WTC11 (cell line): ENCODE measurements at regions of chr2 and their contacts with region 1.

Region 1: GRCh38 chr2:238263204-238264071 is 23.6 kb upstream of the HES6 start:
- DNase-seq: peak; percentile 91
- ATAC-seq: peak; percentile 89
- H3K4me3 Mint-ChIP-seq: no peak overlapping the region
- H3K27ac Mint-ChIP-seq: peak overlapping the region; percentile 83
- H3K4me1 Mint-ChIP-seq: peaks cover 3% of the 10 kb centered on the region
- H3K27me3 Mint-ChIP-seq: no peaks in the 10 kb centered on the region
- CTCF ChIP-seq: peak; percentile 68

Region 2: DNA sequence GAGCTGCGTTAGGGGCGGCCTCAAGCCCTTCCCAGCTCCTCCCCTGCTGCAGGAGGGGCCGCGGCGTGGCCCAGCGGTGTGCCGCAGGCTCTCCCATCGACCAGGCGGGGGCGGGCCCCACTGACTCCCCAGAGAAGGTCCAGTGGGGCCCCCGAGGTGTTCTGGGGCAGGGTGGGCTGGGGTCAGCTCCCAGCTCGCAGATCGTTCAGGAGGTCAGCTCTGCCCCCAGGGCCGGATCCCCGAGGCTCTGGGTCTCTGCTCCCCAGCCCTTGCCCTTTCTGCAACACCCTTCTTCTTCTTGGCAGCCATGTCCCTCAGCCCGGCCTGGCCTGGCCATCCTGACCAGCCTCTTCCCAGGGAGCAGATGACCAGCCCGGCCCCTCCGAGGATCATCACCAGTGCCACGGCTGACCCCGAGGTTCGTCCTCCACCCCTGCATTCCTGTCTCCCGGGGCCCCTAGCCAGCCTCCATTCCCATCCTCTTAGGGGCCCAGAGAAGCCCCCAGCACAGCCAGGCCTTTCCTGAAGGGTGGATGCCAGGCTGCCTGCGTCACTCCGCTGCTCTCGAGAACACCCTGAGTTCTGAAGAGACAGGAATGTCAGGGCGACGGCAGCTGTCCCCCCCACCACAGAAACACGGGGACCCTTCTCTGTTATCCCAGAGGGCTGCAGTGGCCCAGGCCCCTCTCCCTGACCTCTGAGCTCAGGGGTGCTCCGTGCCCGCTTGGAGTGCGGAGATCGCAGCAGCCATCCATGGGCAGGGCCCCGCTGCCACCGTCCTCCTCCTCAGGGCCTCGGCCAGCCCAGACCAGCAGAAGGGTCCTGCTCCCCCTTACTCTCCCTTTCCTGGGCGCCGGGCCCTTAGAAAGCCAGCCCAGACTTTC is 135.9 kb before region 1 on chr2:
- CTCF ChIA-PET with region 1: interaction called, 10 read pairs
- POLR2A ChIA-PET with region 1: no interaction called
- DNase-seq: no peak
- ATAC-seq: peak; percentile 46
- H3K4me3 Mint-ChIP-seq: no peak overlapping the region
- H3K27ac Mint-ChIP-seq: no peak overlapping the region
- H3K4me1 Mint-ChIP-seq: no peaks in the 10 kb centered on the region
- H3K27me3 Mint-ChIP-seq: no peaks in the 10 kb centered on the region
- CTCF ChIP-seq: no peak

Region 3: DNA sequence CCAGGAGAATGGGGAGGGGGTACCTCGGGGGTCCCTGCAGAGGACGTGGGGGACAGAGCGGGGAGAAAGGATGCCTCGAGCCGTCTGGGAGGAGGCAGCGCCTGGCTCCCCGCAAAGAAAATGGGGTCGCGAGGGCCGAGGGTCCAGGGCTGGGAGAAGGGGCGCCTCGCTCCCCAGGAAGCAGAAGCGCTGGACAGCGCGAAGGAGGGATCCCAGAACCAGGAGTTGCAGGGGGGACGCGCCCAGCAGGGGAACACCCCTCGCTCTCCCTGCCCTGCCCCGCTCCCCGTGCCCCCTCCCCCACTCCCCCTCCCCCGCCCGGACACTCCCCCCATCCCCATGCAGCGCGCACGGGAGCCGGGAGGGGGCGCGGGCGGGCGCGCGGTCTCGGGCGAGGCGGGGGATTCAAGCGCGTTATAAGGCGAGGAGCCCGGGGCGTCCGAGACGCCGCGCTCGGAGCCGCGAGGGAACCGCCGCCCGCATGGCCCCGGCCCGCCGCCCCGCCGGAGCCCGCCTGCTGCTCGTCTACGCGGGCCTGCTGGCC is 104.8 kb before region 1 on chr2 and contains the start of gene ERFE:
- CTCF ChIA-PET with region 1: interaction called, 35 read pairs
- POLR2A ChIA-PET with region 1: no interaction called
- DNase-seq: peak; percentile 66
- ATAC-seq: peak; percentile 68
- H3K4me3 Mint-ChIP-seq: peak within 1 kb of the TSS; percentile 73
- H3K27ac Mint-ChIP-seq: no peak within 1 kb of the TSS
- H3K4me1 Mint-ChIP-seq: peaks cover 11% of the 10 kb centered on the region
- H3K27me3 Mint-ChIP-seq: peaks cover 42% of the 10 kb centered on the region
- CTCF ChIP-seq: peak; percentile 60
- total RNA-seq, gene ERFE: 4.5 to 6.3 TPM (median 6.0 TPM) in 3 replicates

Region 4: DNA sequence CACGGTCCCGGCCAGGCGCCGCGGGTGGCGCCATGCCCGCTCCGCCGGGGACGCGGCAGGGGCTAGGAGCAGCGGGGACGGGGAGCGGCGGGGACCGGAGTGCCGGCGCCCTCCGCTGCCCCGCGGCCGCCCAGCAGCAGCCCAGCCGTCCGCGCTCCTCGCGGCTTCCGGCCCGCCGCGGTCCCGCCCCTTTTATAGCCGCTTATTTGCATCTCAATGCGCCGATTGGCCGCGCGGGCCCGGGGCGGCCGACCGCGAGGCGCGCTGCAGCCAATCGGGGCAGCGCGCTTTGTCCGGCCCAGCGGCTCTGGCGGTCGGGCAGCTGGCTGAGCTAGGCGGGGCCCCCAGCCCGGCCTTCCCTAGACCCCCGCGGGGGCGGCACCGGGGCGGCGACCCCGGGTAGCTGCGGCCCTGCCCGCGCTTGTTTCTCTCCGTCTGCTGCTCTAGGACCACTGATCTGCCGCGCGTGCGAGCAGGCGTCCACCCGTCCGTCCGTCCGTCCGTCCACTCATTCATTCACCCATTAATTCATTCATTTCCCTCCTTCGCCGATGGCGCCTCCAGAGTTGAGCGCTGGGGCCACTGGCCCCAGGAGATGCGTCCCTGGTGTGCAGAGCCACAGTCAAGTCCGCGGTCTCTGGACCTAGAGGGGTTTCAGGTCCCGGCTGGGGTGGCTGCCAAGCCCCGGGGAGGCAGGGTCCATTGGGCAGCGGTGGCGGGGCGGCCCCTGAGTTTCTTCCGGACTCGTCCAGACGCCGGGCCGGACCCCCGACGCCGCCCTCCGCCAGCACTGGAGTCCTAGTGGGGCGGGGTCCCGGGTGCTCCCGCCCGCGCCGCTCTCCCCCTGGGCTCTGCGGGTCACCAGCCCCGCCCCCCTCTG is 23.3 kb before region 1 on chr2 and contains the start of gene HES6:
- CTCF ChIA-PET with region 1: interaction called, 28 read pairs
- POLR2A ChIA-PET with region 1: no interaction called
- DNase-seq: peak; percentile 90
- ATAC-seq: peak; percentile 80
- H3K4me3 Mint-ChIP-seq: peak within 1 kb of the TSS; percentile 87
- H3K27ac Mint-ChIP-seq: peak within 1 kb of the TSS; percentile 95
- H3K4me1 Mint-ChIP-seq: peaks cover 16% of the 10 kb centered on the region
- H3K27me3 Mint-ChIP-seq: peaks cover 51% of the 10 kb centered on the region
- CTCF ChIP-seq: no peak
- total RNA-seq, gene HES6: 52.1 to 63.9 TPM (median 63.4 TPM) in 3 replicates

Region 5: GRCh38 chr2:238277695-238278094 is 14.3 kb after region 1 on chr2:
- CTCF ChIA-PET with region 1: interaction called, 79 read pairs
- POLR2A ChIA-PET with region 1: interaction called, 3 read pairs
- DNase-seq: peak; percentile 61
- ATAC-seq: peak; percentile 89
- H3K4me3 Mint-ChIP-seq: no peak overlapping the region
- H3K27ac Mint-ChIP-seq: peak overlapping the region; percentile 89
- H3K4me1 Mint-ChIP-seq: peaks cover 4% of the 10 kb centered on the region; the same call in 1 of the 2 replicates
- H3K27me3 Mint-ChIP-seq: no peaks in the 10 kb centered on the region
- CTCF ChIP-seq: no peak; the same call in 1 of the 2 replicates

Region 6: GRCh38 chr2:238305092-238305862 is 41.8 kb after region 1 on chr2:
- CTCF ChIA-PET with region 1: interaction called, 11 read pairs
- POLR2A ChIA-PET with region 1: no interaction called
- DNase-seq: no peak
- ATAC-seq: peak; percentile 36
- H3K4me3 Mint-ChIP-seq: no peak overlapping the region
- H3K27ac Mint-ChIP-seq: no peak overlapping the region; the same call in 1 of the 2 replicates
- H3K4me1 Mint-ChIP-seq: no peaks in the 10 kb centered on the region; the same call in 1 of the 2 replicates
- H3K27me3 Mint-ChIP-seq: no peaks in the 10 kb centered on the region
- CTCF ChIP-seq: no peak

Region 7: DNA sequence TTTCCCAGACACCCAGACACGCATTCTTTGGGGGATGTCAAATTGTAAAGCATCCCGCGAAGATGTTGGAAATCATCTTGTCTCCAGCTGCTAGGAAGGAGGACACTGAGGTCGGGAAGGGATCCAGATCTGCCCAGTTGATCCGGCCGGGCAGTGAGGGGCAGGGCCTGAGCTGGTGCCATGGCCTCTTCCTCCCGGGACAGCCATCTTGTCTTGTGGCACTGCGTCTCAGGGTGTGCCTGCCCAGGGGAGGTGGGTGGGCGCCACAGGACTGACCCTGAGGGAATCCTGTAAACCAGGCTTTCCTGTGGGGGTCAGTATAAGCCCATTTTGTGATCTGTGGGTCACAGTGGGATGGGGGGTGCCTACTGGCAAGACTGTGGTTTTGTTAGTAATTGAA is 67.0 kb after region 1 on chr2:
- CTCF ChIA-PET with region 1: no interaction called
- POLR2A ChIA-PET with region 1: no interaction called
- DNase-seq: no peak
- ATAC-seq: no peak
- H3K4me3 Mint-ChIP-seq: no peak overlapping the region
- H3K27ac Mint-ChIP-seq: no peak overlapping the region
- H3K4me1 Mint-ChIP-seq: no peaks in the 10 kb centered on the region
- H3K27me3 Mint-ChIP-seq: no peaks in the 10 kb centered on the region
- CTCF ChIP-seq: no peak

Region 8: DNA sequence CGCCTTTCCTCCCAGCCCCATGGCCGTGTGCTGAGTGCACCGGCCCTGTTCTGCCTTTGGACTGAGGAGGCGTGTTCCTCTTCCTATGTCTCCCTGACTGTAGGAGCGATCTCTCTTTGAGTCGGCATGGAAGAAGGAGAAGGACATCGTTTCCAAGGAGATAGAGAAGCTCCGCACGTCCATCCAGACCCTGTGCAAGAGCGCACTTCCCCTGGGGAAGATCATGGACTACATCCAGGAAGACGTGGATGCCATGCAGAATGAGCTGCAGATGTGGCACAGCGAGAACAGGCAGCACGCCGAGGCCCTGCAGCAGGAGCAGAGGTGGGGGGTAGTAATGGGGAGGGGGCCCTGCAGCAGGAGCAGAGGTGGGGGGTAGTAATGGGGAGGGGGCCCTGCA is 133.9 kb after region 1 on chr2:
- CTCF ChIA-PET with region 1: no interaction called
- POLR2A ChIA-PET with region 1: no interaction called
- DNase-seq: no peak
- ATAC-seq: peak; percentile 39; the same call in 1 of the 2 replicates
- H3K4me3 Mint-ChIP-seq: no peak overlapping the region
- H3K27ac Mint-ChIP-seq: no peak overlapping the region
- H3K4me1 Mint-ChIP-seq: peaks cover 3% of the 10 kb centered on the region
- H3K27me3 Mint-ChIP-seq: no peaks in the 10 kb centered on the region
- CTCF ChIP-seq: no peak